ENCODE measurements at regions of chr11 and their contacts with region 1.

Region 1: DNA sequence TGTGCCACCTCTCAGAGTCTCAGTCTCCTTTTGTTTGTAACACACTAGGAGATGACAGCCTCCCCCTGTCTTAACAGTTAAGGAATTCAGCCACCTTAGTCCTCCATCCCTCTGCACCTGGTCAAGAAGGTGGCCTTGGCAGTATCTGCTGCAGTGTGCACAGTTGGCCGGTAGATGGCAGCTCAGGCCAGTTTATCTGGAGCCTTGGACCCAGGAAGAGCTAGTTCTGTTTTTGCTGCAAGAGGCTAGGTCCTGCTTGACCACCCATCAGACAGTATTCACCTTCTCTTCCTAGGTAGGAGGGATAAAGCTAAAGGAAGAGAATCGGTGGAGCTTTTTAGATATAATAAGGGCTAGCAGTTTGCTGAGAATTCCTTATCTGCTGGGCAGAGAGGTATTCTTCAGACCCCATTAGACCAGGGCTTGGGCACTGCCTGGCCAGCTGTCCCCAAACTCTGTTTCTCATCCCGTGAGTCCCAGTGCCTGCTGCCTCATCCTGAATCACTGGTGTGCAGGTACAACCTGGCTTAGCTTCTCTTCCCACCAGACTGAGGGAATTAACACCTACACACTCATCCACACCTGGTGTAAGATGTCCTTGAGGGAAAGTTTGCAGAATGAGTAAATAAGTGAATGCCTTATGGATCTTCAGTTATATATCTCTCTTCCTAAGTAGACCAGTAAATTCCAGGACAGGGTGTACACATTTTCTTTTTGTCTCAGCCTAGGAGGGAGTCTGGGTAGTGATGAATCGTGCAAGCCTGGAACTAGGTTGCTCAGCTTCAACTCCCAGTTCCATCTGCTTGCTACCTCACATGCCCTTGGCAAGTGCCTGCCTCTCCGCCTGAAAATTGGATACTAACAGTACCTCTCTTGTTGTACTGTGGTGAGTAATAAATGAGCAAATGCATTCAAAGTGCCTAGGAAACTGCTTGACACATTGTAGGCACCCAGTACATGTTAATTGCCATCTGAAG is 70.8 kb upstream of the NARS2 start:
- DNase-seq: peak; percentile 87
- ATAC-seq: peak; percentile 94
- H3K4me3 Mint-ChIP-seq: no peak overlapping the region
- H3K27ac Mint-ChIP-seq: no peak overlapping the region
- H3K4me1 Mint-ChIP-seq: peaks cover under 1% of the 10 kb centered on the region
- H3K27me3 Mint-ChIP-seq: no peaks in the 10 kb centered on the region
- CTCF ChIP-seq: peak; percentile 93

Region 2: GRCh38 chr11:78688464-78688863 is 43.0 kb after region 1 on chr11:
- CTCF ChIA-PET with region 1: interaction called, 14 read pairs
- POLR2A ChIA-PET with region 1: no interaction called
- DNase-seq: no peak
- ATAC-seq: peak; percentile 19
- H3K4me3 Mint-ChIP-seq: no peak overlapping the region
- H3K27ac Mint-ChIP-seq: peak overlapping the region; percentile 23; the same call in 1 of the 2 replicates
- H3K4me1 Mint-ChIP-seq: peaks cover 36% of the 10 kb centered on the region
- H3K27me3 Mint-ChIP-seq: no peaks in the 10 kb centered on the region
- CTCF ChIP-seq: no peak

Region 3: GRCh38 chr11:78798660-78799059 is 153.1 kb after region 1 on chr11:
- CTCF ChIA-PET with region 1: interaction called, 39 read pairs
- POLR2A ChIA-PET with region 1: no interaction called
- DNase-seq: peak; percentile 82
- ATAC-seq: peak; percentile 90
- H3K4me3 Mint-ChIP-seq: no peak overlapping the region
- H3K27ac Mint-ChIP-seq: no peak overlapping the region
- H3K4me1 Mint-ChIP-seq: peaks cover 28% of the 10 kb centered on the region
- H3K27me3 Mint-ChIP-seq: no peaks in the 10 kb centered on the region
- CTCF ChIP-seq: peak; percentile 93

Region 4: GRCh38 chr11:78940500-78941225 is 295.1 kb after region 1 on chr11:
- CTCF ChIA-PET with region 1: interaction called, 15 read pairs
- POLR2A ChIA-PET with region 1: no interaction called
- DNase-seq: peak; percentile 55
- ATAC-seq: peak; percentile 94
- H3K4me3 Mint-ChIP-seq: no peak overlapping the region
- H3K27ac Mint-ChIP-seq: 0 out of 2 replicates have a peak overlapping the region, but pooled peaks have one; percentile 44
- H3K4me1 Mint-ChIP-seq: peaks cover 41% of the 10 kb centered on the region
- H3K27me3 Mint-ChIP-seq: peaks cover 5% of the 10 kb centered on the region
- CTCF ChIP-seq: no peak

Region 5: DNA sequence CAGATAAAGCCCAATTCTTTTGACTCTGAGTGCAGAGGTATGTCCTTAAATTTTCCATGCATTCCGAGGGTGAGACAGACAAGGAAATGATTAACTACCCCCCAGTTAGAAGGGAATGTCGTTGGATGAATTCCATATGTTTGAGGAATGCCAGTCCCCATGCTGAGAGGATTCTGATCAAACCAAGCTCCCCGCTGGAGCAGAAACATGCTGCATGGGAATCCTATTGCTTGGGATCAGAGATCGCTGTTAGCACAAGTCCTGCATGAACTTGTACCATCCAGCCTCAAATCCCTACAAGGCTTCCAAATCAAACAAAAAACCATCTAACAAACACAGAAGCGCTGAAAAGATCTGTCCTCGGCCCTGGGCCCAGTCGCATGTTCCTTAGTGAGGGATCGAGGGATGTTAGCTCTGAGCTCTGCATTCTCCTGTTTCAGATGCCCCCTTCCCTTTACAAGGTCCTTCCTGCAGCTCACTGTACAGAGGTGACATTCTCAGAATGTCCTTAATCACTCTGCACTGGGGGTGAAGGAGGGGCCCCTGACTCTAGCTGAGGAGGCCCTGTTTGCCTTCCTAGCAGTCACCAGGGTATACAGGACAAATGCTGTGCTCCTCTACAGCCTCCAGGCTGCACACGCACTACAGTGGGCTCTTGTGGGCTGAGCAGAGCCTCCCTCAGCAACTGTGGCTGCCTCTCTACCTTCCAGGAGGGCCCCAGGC is 441.9 kb after region 1 on chr11:
- CTCF ChIA-PET with region 1: interaction called, 15 read pairs
- POLR2A ChIA-PET with region 1: no interaction called
- DNase-seq: no peak
- ATAC-seq: peak; percentile 60
- H3K4me3 Mint-ChIP-seq: no peak overlapping the region
- H3K27ac Mint-ChIP-seq: peak overlapping the region; percentile 17
- H3K4me1 Mint-ChIP-seq: peaks cover 34% of the 10 kb centered on the region
- H3K27me3 Mint-ChIP-seq: no peaks in the 10 kb centered on the region
- CTCF ChIP-seq: no peak